ENCODE measurements at regions of chr1 and their contacts with region 1.

Region 1: GRCh38 chr1:66374561-66375111 is 159.3 kb upstream of the SGIP1 start:
- DNase-seq: peak; percentile 96
- ATAC-seq: peak; percentile 66
- H3K4me3 ChIP-seq: no peak overlapping the region
- H3K27ac ChIP-seq: peak overlapping the region; percentile 92
- H3K4me1 ChIP-seq: peaks cover 65% of the 10 kb centered on the region
- H3K27me3 ChIP-seq: no peaks in the 10 kb centered on the region
- CTCF ChIP-seq: no peak
- EP300 ChIP-seq: peak; percentile 75 to 85; a peak in 3 of 4 replicates
- POLR2A ChIP-seq: no peak
- RAD21 ChIP-seq: peak; percentile 16

Region 2: GRCh38 chr1:65939636-65940035 is 435.0 kb before region 1 on chr1:
- CTCF ChIA-PET with region 1: no interaction called
- POLR2A ChIA-PET with region 1: no interaction called
- RAD21 ChIA-PET with region 1: no interaction called
- SMC1A ChIA-PET with region 1: no interaction called
- in situ Hi-C with region 1: no loop called
- intact Hi-C with region 1: no loop called
- DNase-seq: no peak
- ATAC-seq: no peak
- H3K4me3 ChIP-seq: no peak overlapping the region
- H3K27ac ChIP-seq: no peak overlapping the region
- H3K4me1 ChIP-seq: no peaks in the 10 kb centered on the region
- H3K27me3 ChIP-seq: no peaks in the 10 kb centered on the region
- CTCF ChIP-seq: no peak
- EP300 ChIP-seq: no peak
- POLR2A ChIP-seq: no peak
- RAD21 ChIP-seq: no peak

Region 3: GRCh38 chr1:66253330-66253921 is 121.2 kb before region 1 on chr1:
- CTCF ChIA-PET with region 1: interaction called, 15 read pairs
- POLR2A ChIA-PET with region 1: no interaction called
- RAD21 ChIA-PET with region 1: interaction called, 7 read pairs
- SMC1A ChIA-PET with region 1: interaction called, 75 read pairs
- in situ Hi-C with region 1: no loop called
- intact Hi-C with region 1: loop called (anchors 2 kb)
- DNase-seq: peak; percentile 55
- ATAC-seq: peak; percentile 90
- H3K4me3 ChIP-seq: no peak overlapping the region
- H3K27ac ChIP-seq: no peak overlapping the region
- H3K4me1 ChIP-seq: peaks cover 1% of the 10 kb centered on the region; the same call in 1 of the 2 replicates
- H3K27me3 ChIP-seq: no peaks in the 10 kb centered on the region
- CTCF ChIP-seq: peak; percentile 75 to 92 (median 81)
- EP300 ChIP-seq: no peak
- POLR2A ChIP-seq: no peak
- RAD21 ChIP-seq: peak; percentile 100

Region 4: GRCh38 chr1:66331657-66332547 is 42.7 kb before region 1 on chr1:
- CTCF ChIA-PET with region 1: interaction called, 4 read pairs
- POLR2A ChIA-PET with region 1: interaction called, 6 read pairs
- RAD21 ChIA-PET with region 1: interaction called, 22 read pairs
- SMC1A ChIA-PET with region 1: interaction called, 23 read pairs
- in situ Hi-C with region 1: no loop called
- intact Hi-C with region 1: loop called (anchors 2 kb)
- DNase-seq: no peak
- ATAC-seq: peak; percentile 13
- H3K4me3 ChIP-seq: peak overlapping the region; percentile 81
- H3K27ac ChIP-seq: peak overlapping the region; percentile 93
- H3K4me1 ChIP-seq: peaks cover 49% of the 10 kb centered on the region
- H3K27me3 ChIP-seq: no peaks in the 10 kb centered on the region
- CTCF ChIP-seq: no peak
- EP300 ChIP-seq: peak in 1 of 2 experiments; percentile 41; a peak in 1 of 4 replicates
- POLR2A ChIP-seq: peak; percentile 48; the same call in 1 of the 2 replicates
- RAD21 ChIP-seq: no peak

Region 5: GRCh38 chr1:66360285-66360724 is 14.3 kb before region 1 on chr1:
- CTCF ChIA-PET with region 1: interaction called, 76 read pairs
- POLR2A ChIA-PET with region 1: interaction called, 5 read pairs
- RAD21 ChIA-PET with region 1: interaction called, 41 read pairs
- SMC1A ChIA-PET with region 1: interaction called, 63 read pairs
- in situ Hi-C with region 1: no loop called
- intact Hi-C with region 1: no loop called
- DNase-seq: no peak
- ATAC-seq: peak; percentile 51
- H3K4me3 ChIP-seq: no peak overlapping the region
- H3K27ac ChIP-seq: no peak overlapping the region
- H3K4me1 ChIP-seq: peaks cover 16% of the 10 kb centered on the region
- H3K27me3 ChIP-seq: no peaks in the 10 kb centered on the region
- CTCF ChIP-seq: peak; percentile 30 to 44 (median 37); a peak in 4 of 6 replicates
- EP300 ChIP-seq: no peak
- POLR2A ChIP-seq: no peak
- RAD21 ChIP-seq: peak; percentile 59

Region 6: DNA sequence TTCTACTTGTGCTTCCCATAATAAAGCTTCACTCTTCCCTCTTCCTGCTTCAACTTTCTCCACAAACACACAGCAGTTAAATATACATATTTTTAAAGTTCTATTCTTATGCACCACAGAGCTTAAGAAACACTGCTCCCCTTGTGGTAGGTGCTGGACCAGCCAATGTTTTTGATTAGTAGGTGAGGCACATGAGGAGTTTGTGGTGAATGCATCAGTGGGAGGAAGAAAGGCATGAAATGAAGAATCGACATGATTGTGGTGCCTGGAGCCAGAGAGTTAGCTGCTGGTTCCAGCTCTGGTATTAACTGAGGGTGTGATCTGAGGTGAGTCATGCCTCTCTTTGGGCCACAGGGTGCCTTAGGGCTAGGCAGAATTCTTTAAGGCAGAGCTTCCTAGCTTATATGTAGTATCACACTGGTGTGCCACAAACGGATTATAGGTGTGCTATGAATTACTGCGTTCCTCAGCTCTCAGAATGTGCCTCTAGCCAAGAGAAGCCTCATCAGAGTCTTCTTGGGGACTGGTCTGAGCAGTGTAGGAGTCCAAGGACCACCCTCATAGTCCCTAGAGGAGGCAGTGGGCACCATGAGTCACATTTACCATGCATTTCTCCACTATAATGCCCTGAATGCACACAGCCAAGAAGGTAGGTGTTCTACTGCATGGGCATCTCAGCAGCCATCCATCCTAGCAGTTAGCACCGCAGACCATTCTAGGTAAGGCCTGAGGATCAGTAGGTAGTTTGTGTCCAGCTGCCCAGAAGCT is 61.9 kb after region 1 on chr1:
- CTCF ChIA-PET with region 1: interaction called, 396 read pairs
- POLR2A ChIA-PET with region 1: interaction called, 8 read pairs
- RAD21 ChIA-PET with region 1: interaction called, 53 read pairs
- SMC1A ChIA-PET with region 1: interaction called, 196 read pairs
- in situ Hi-C with region 1: no loop called
- intact Hi-C with region 1: loop called (anchors 1 kb)
- DNase-seq: peak; percentile 44
- ATAC-seq: peak; percentile 85
- H3K4me3 ChIP-seq: no peak overlapping the region
- H3K27ac ChIP-seq: peak overlapping the region; percentile 7; the same call in 1 of the 2 replicates
- H3K4me1 ChIP-seq: peaks cover 31% of the 10 kb centered on the region
- H3K27me3 ChIP-seq: no peaks in the 10 kb centered on the region
- CTCF ChIP-seq: peak; percentile 27 to 56 (median 50); a peak in 5 of 6 replicates
- EP300 ChIP-seq: no peak
- POLR2A ChIP-seq: no peak
- RAD21 ChIP-seq: peak; percentile 58

Region 7: GRCh38 chr1:66464802-66465201 is 90.2 kb after region 1 on chr1:
- CTCF ChIA-PET with region 1: no interaction called
- POLR2A ChIA-PET with region 1: no interaction called
- RAD21 ChIA-PET with region 1: no interaction called
- SMC1A ChIA-PET with region 1: no interaction called
- in situ Hi-C with region 1: no loop called
- intact Hi-C with region 1: no loop called
- DNase-seq: no peak
- ATAC-seq: no peak
- H3K4me3 ChIP-seq: no peak overlapping the region
- H3K27ac ChIP-seq: no peak overlapping the region
- H3K4me1 ChIP-seq: no peaks in the 10 kb centered on the region
- H3K27me3 ChIP-seq: peaks cover 0 to 3% of the 10 kb centered on the region in 2 experiments; a peak in 1 of 4 replicates
- CTCF ChIP-seq: no peak
- EP300 ChIP-seq: no peak
- POLR2A ChIP-seq: no peak
- RAD21 ChIP-seq: no peak

Region 8: GRCh38 chr1:66490816-66491215 is 116.2 kb after region 1 on chr1:
- CTCF ChIA-PET with region 1: no interaction called
- POLR2A ChIA-PET with region 1: no interaction called
- RAD21 ChIA-PET with region 1: no interaction called
- SMC1A ChIA-PET with region 1: no interaction called
- in situ Hi-C with region 1: no loop called
- intact Hi-C with region 1: no loop called
- DNase-seq: no peak
- ATAC-seq: no peak
- H3K4me3 ChIP-seq: no peak overlapping the region
- H3K27ac ChIP-seq: no peak overlapping the region
- H3K4me1 ChIP-seq: no peaks in the 10 kb centered on the region
- H3K27me3 ChIP-seq: no peaks in the 10 kb centered on the region
- CTCF ChIP-seq: no peak
- EP300 ChIP-seq: no peak
- POLR2A ChIP-seq: no peak
- RAD21 ChIP-seq: no peak

Region 9: DNA sequence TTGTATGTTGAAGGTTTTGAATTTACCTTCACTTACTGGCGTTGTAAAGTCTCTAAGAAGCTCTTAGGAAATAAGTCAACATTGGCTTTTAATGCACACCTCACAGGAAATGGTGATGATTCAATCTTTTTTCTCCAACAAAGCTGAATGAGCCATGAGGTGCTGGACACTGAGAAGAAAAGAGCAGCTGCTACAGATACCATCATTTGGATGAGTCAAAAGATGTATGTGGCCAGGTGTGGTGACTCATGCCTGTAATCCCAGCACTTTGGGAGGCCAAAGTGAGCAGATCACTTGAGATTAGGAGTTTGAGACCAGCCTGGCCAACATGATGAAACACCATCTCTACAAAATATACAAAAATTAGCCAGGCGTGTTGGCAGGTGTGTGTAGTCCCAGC is 788.3 kb after region 1 on chr1:
- CTCF ChIA-PET with region 1: no interaction called
- POLR2A ChIA-PET with region 1: no interaction called
- RAD21 ChIA-PET with region 1: no interaction called
- SMC1A ChIA-PET with region 1: no interaction called
- in situ Hi-C with region 1: loop called (anchors 25 kb)
- intact Hi-C with region 1: no loop called
- DNase-seq: no peak
- ATAC-seq: peak; percentile 53
- H3K4me3 ChIP-seq: no peak overlapping the region
- H3K27ac ChIP-seq: no peak overlapping the region
- H3K4me1 ChIP-seq: peaks cover 3% of the 10 kb centered on the region; the same call in 1 of the 2 replicates
- H3K27me3 ChIP-seq: no peaks in the 10 kb centered on the region
- CTCF ChIP-seq: no peak
- EP300 ChIP-seq: no peak; a peak in 1 of 4 replicates
- POLR2A ChIP-seq: no peak
- RAD21 ChIP-seq: no peak

Measured in GM12878 (cell line).